ENCODE measurements at regions of chr3 and their contacts with region 1.

Region 1: GRCh38 chr3:14921078-14921616 is 26.2 kb upstream of the NR2C2 start:
- DNase-seq: peak; percentile 47 to 90
- H3K4me3 ChIP-seq: no peak overlapping the region
- H3K4me1 ChIP-seq: no peaks in the 10 kb centered on the region
- H3K27me3 ChIP-seq: peaks cover 10% of the 10 kb centered on the region; the same call in 1 of the 2 replicates

Region 2: GRCh38 chr3:14234251-14235002 is 686.7 kb before region 1 on chr3:
- in situ Hi-C with region 1: loop called (anchors 25 kb)
- DNase-seq: no peak
- H3K4me3 ChIP-seq: no peak overlapping the region
- H3K4me1 ChIP-seq: no peaks in the 10 kb centered on the region
- H3K27me3 ChIP-seq: 0 out of 2 replicates have a peak, but pooled peaks cover 2% of the 10 kb centered on the region

Region 3: DNA sequence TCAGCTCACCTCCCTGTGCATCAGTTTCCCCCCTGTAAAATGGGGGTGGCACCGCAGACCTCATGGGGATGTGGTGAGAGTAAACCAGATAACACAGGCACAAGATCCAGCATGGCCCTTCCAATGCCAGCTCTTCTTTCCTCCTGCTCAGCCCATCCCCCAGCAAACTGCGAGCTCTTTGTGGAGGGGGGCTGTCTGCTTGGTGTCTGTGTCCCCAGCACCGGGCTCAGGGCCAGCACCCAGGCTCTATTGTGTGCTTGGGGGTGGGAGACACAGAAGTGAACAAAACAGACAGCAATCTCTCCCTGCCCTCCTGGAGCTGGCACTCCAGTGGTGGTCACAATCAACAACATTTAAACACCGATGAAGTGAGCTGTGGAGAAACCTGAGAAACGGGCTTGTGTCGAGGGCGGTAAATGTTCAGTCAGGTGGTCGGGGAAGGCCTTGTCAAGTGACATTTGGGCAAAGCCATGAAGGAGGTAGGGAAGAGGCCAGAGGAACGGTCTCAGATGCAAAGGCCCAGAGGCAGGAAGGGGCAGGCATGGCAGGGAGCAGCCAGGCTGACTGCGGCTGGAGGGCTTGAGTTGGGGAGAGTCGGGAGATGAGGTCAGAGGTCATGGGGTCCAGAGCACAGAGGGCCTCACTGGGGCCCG is 409.4 kb before region 1 on chr3:
- in situ Hi-C with region 1: loop called (anchors 10 kb)
- DNase-seq: no peak
- H3K4me3 ChIP-seq: no peak overlapping the region
- H3K4me1 ChIP-seq: no peaks in the 10 kb centered on the region
- H3K27me3 ChIP-seq: no peaks in the 10 kb centered on the region

Region 4: GRCh38 chr3:14672588-14672987 is 248.6 kb before region 1 on chr3:
- in situ Hi-C with region 1: loop called (anchors 5 kb)
- DNase-seq: no peak
- H3K4me3 ChIP-seq: no peak overlapping the region
- H3K4me1 ChIP-seq: no peaks in the 10 kb centered on the region; the same call in 1 of the 2 replicates
- H3K27me3 ChIP-seq: no peaks in the 10 kb centered on the region